AG04449 (cell line): ENCODE measurements at regions of chr15 and their contacts with region 1.

Region 1: DNA sequence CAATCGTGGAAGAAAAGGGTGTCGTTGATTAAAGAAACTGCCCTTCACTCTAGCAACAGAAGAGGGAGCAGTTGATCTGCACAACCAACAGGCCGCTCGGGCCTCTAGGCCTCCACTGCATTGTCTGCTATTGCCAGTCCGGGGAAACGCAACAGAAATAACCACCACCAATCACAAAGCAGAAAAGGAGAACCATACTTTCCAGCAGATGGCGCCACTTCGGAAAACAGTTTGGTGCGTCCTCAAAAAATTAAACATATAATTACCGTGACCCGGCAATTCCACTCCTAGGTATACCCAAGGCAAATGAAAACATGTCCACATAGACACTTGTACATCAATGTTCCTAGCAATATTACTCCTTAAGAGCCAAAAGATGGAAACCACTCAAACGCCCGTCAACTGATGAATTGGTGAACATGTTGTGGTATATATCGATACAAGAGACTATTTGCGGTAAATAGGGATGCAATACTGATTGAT is 154.1 kb downstream of the TJP1 start:
- DNase-seq: no peak
- H3K4me3 ChIP-seq: no peak overlapping the region
- CTCF ChIP-seq: peak; percentile 63

Region 2: DNA sequence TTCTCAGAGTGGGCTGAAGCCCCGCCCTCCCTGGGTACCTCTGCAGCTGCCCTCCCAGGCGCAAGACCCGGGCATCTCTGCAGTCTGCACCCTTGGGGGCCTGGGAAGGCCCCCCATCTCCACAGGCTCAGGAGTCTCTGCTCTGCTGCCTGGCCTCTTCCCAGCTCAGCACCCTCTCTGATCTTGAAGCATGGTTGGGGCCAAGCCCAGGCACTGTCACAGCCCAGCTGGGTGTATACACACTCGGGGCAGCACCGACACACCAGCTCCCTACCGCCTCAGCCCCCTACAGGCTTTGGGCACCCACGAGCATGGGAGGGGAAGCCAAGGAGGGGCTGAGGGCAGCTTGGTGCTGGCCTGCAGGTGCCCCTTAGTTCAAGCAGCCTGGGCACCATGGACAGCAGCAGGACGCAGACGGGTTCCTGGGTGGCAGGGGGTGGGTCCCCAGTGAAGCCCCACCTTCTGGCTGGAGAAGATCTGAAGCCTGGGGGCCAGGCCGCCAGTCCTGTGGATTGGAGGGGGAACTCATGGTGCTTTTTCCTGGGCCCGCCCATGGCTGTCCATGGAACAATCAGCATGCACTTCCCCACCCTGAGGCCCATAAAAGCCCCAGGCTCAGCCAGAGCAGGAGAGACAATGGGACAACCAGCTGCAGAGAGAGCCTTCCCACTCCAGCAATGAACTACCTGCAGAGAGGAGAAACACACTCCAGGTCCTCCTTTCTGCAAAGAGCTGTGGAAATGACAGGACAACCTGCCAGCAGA is 16.5 kb before region 1 on chr15:
- CTCF ChIA-PET with region 1: interaction called, 14 read pairs
- POLR2A ChIA-PET with region 1: no interaction called
- DNase-seq: no peak
- H3K4me3 ChIP-seq: no peak overlapping the region
- CTCF ChIP-seq: no peak

Region 3: GRCh38 chr15:30073915-30074314 is 405.8 kb after region 1 on chr15:
- CTCF ChIA-PET with region 1: interaction called, 34 read pairs
- POLR2A ChIA-PET with region 1: no interaction called
- DNase-seq: no peak
- H3K4me3 ChIP-seq: no peak overlapping the region
- CTCF ChIP-seq: no peak